PC-3 (cell line): ENCODE measurements at regions of chrX and their contacts with region 1.

Region 1: GRCh38 chrX:14872851-14873675 is at the starts of genes FANCB and MOSPD2:
- DNase-seq: peak; percentile 95
- ATAC-seq: peak; percentile 97
- H3K4me3 ChIP-seq: peak within 1 kb of the TSS; percentile 93
- H3K27ac ChIP-seq: no peak within 1 kb of the TSS
- H3K4me1 ChIP-seq: peaks cover 15% of the 10 kb centered on the region; the same call in 1 of the 2 replicates
- H3K27me3 ChIP-seq: no peaks in the 10 kb centered on the region
- CTCF ChIP-seq: no peak
- total RNA-seq, gene FANCB: 7.9 and 11.6 TPM in 2 replicates
- total RNA-seq, gene MOSPD2: 6.7 and 11.6 TPM in 2 replicates

Region 2: GRCh38 chrX:14922437-14922836 is 49.4 kb after region 1 on chrX:
- CTCF ChIA-PET with region 1: no interaction called
- POLR2A ChIA-PET with region 1: no interaction called
- intact Hi-C with region 1: loop called (anchors 5 kb)
- DNase-seq: peak; percentile 64
- ATAC-seq: peak; percentile 92
- H3K4me3 ChIP-seq: no peak overlapping the region
- H3K27ac ChIP-seq: no peak overlapping the region
- H3K4me1 ChIP-seq: peaks cover 6% of the 10 kb centered on the region; the same call in 1 of the 2 replicates
- H3K27me3 ChIP-seq: no peaks in the 10 kb centered on the region
- CTCF ChIP-seq: no peak

Region 3: GRCh38 chrX:15143050-15143824 is 270.2 kb after region 1 on chrX:
- CTCF ChIA-PET with region 1: no interaction called
- POLR2A ChIA-PET with region 1: no interaction called
- intact Hi-C with region 1: loop called (anchors 5 kb)
- DNase-seq: peak; percentile 75
- ATAC-seq: peak; percentile 88
- H3K4me3 ChIP-seq: no peak overlapping the region
- H3K27ac ChIP-seq: no peak overlapping the region
- H3K4me1 ChIP-seq: no peaks in the 10 kb centered on the region
- H3K27me3 ChIP-seq: no peaks in the 10 kb centered on the region
- CTCF ChIP-seq: peak; percentile 90